ENCODE measurements at regions of chr12 and their contacts with region 1.

Region 1: DNA sequence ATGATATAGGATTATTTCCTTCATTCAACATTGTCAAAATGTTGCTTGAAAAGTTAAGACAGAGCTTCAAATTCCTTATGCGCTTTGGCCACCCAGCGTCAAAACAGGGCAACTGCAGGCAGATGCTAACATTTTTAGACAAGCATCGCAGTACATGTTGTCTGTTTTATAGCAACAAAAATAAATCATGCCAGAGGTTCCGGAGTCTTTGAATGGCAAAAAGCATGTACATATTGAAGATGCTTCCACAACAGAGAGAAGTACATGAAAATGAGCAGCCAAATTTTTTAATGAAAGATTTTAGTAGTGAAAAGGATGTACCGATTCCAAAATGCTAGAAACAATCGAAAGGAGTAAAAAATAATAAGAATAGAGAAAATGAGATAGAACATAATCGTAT is 49.8 kb upstream of the USP15 start:
- DNase-seq: peak; percentile 39
- H3K4me3 ChIP-seq: no peak overlapping the region
- H3K27ac ChIP-seq: no peak overlapping the region
- H3K4me1 ChIP-seq: no peaks in the 10 kb centered on the region
- H3K27me3 ChIP-seq: peaks cover 1 to 2% of the 10 kb centered on the region in 2 experiments
- CTCF ChIP-seq: peak; percentile 64 to 69
- POLR2A ChIP-seq: no peak

Region 2: DNA sequence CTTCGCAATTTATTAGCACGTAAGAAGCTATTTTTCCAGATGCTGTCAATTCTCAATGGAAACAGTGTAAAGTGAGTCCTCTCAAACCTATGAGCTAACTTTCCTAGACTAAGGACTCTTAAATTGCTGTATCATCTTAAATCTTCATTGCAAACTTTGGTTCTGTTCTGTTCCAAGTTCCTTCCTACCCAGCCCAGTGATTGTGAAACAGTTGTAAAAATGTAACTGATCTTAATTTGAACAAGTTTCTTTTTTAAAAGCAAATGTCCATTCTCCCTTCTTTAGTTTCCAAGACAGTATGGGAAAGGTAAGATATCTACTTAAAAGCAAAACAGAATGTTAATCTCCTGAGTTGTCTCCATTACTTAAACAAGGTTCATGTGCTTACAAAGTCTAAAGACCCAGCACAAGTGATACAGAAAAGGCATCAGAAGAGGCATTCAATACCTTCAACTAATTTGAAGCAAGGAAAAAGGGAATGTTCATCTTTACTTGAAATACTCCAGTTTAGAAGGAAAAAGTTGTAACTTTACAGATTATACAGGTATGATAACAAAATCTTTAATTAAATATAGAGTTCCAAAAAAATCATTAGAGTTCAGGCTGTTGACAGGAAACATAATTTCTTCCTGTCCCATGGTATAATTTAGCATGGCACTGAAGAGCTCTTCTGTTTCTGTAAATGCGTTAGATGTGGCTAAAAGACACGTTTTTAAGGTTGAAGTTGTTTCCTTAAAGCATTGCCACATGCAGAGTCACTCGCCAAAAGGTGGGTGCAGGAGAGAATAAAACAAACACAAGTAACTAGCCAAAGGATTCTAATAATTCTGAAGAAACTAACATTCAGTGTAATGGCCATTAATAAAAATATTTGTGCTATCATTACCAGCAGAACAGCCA is 51.7 kb before region 1 on chr12:
- CTCF ChIA-PET with region 1: no interaction called
- POLR2A ChIA-PET with region 1: no interaction called
- dilution Hi-C with region 1: no loop called
- intact Hi-C with region 1: no loop called
- DNase-seq: no peak
- H3K4me3 ChIP-seq: no peak overlapping the region
- H3K27ac ChIP-seq: no peak overlapping the region
- H3K4me1 ChIP-seq: no peaks in the 10 kb centered on the region
- H3K27me3 ChIP-seq: no peaks in the 10 kb centered on the region
- CTCF ChIP-seq: no peak
- POLR2A ChIP-seq: no peak

Region 3: DNA sequence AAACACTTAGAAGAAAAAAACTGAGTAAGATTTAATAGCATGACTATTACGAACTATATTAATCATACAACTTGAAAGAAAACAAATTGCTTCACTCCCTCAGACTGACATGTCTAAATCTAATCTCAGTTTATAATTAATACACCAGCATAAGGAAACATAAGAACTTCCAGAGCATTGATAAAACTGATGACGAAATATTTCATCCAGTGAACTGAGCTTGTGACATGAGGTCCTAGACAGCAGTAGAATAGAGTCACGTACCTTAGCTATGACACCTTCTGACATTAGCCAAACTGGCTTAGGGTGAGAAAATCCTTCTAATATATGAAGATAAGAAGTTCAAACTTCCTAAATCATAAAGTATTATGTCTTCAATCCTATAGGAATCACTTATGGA is 28.9 kb before region 1 on chr12:
- CTCF ChIA-PET with region 1: interaction called, 17 read pairs
- POLR2A ChIA-PET with region 1: no interaction called
- dilution Hi-C with region 1: no loop called
- intact Hi-C with region 1: no loop called
- DNase-seq: no peak
- H3K4me3 ChIP-seq: no peak overlapping the region
- H3K27ac ChIP-seq: no peak overlapping the region
- H3K4me1 ChIP-seq: no peaks in the 10 kb centered on the region
- H3K27me3 ChIP-seq: peaks cover 0 to 5% of the 10 kb centered on the region in 2 experiments
- CTCF ChIP-seq: no peak
- POLR2A ChIP-seq: no peak